ENCODE measurements at regions of chr16 and their contacts with region 1.

Region 1: DNA sequence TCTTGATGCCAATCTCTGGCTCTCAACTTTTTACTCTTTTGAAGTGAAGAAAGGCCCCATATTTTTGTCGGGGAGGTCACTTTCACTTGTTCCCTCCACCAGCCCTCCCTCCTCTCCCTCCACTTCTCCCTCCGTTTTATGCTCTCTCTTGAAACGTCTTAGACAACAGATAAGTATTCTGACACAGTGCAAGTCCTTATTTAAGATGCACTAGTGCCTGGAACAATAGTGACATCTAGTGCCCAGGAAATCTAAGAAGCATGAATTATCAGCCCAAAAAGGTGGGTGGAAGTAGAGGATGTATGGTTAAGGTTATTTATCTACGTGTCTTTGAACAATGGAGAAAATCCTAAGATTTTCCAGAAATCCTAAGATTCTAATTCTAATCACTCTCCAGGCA is 17.9 kb downstream of the PSME3IP1 start:
- DNase-seq: no peak

Region 2: DNA sequence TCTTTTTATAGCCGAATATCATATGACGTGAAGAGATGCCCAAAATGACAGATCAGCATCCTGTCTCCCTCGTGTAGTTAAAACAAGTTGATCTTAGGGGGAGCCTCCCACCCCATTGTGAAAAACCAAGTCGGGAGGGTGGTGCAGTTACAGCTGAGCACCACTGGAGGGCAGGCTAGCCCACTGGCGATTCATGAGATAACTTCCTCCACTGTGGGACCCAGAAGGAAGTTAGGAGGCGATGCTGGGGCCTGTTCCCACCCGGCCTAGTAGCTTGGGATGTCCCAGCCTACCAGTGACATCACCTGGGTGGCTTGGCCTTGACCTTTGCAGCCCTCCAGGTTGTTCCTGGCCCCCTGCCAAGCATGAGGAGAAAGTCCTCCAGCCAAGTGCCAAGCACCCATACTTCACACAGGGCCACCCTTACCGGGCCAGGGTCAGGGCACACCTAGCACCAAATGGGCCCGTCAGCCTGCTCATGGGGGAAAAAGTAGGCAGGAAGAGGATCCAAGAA is 83.6 kb before region 1 on chr16:
- intact Hi-C with region 1: loop called in 1 of 2 experiments (anchors 5 kb)
- DNase-seq: peak; percentile 92

Region 3: GRCh38 chr16:57383276-57384247 is 215.6 kb after region 1 on chr16:
- intact Hi-C with region 1: no loop called
- DNase-seq: no peak

Measured in posterior vena cava (tissue), 2 donors.